A673 (cell line): ENCODE measurements at regions of chr2 and their contacts with region 1.

Region 1: GRCh38 chr2:86052676-86053075 is 53.0 kb downstream of the POLR1A start:
- DNase-seq: no peak
- H3K4me3 ChIP-seq: no peak overlapping the region
- H3K27ac ChIP-seq: no peak overlapping the region
- H3K4me1 ChIP-seq: no peaks in the 10 kb centered on the region
- H3K27me3 ChIP-seq: no peaks in the 10 kb centered on the region
- CTCF ChIP-seq: no peak

Region 2: GRCh38 chr2:85376291-85377065 is 676.2 kb before region 1 on chr2:
- CTCF ChIA-PET with region 1: no interaction called
- POLR2A ChIA-PET with region 1: interaction called, 14 read pairs
- intact Hi-C with region 1: no loop called
- DNase-seq: no peak
- H3K4me3 ChIP-seq: no peak overlapping the region
- H3K27ac ChIP-seq: no peak overlapping the region
- H3K4me1 ChIP-seq: no peaks in the 10 kb centered on the region
- H3K27me3 ChIP-seq: no peaks in the 10 kb centered on the region
- CTCF ChIP-seq: no peak

Region 3: GRCh38 chr2:85813982-85814801 is 238.5 kb before region 1 on chr2:
- CTCF ChIA-PET with region 1: no interaction called
- POLR2A ChIA-PET with region 1: no interaction called
- intact Hi-C with region 1: no loop called
- DNase-seq: peak; percentile 88
- H3K4me3 ChIP-seq: no peak overlapping the region
- H3K27ac ChIP-seq: no peak overlapping the region
- H3K4me1 ChIP-seq: no peaks in the 10 kb centered on the region
- H3K27me3 ChIP-seq: no peaks in the 10 kb centered on the region
- CTCF ChIP-seq: peak; percentile 94